K562 (cell line): ENCODE measurements at regions of chr5 and their contacts with region 1.

Region 1: DNA sequence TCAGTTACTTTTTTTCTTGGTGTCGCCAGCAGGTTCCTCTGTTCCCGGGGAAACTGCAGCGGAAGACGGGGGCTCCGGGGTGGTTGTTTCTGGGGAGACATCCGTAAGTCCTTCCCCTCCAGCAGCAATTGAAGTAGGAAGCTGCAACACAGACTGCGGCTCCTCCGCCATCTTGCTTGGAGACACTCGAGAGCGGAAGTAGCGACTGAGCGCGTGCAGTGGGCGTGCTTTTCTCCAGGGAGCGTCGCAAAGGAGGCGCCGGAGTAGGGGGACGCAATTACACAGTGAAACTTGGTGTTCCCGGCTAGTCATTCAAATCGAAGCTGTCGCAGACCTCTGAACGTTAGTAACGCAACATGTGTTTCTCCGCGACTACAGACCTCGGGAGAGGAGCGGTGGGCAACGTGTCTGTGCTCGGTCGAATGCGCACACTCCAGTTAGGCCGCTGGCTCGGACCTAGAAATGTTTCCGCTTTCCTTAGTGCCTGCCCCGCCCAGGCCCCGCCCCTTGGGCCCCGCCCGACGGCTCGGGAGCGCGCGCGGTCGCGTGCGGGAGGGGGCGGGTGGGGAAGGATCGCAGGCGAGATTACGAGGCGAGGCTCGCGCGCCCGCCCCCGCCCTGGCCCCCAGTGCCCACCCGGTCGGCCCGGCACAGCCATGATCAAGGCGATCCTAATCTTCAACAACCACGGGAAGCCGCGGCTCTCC is at the starts of genes AP3S1 and ATG12:
- DNase-seq: peak; percentile 88 to 96 (median 92)
- ATAC-seq: peak; percentile 88
- H3K4me3 ChIP-seq: peak within 1 kb of the TSS; percentile 79
- H3K27ac ChIP-seq: peak within 1 kb of the TSS; percentile 99
- H3K4me1 ChIP-seq: peaks cover 14 to 15% of the 10 kb centered on the region in 2 experiments; a peak in 4 of 5 replicates
- H3K27me3 ChIP-seq: no peaks in the 10 kb centered on the region
- CTCF ChIP-seq: no peak
- EP300 ChIP-seq: no peak
- POLR2A ChIP-seq: peak; percentile 95
- RAD21 ChIP-seq: no peak
- polyA plus RNA-seq, gene AP3S1: 46.1 to 46.3 TPM
- polyA plus RNA-seq, gene ATG12: 99.6 to 114 TPM

Region 2: GRCh38 chr5:115309751-115310370 is 531.7 kb before region 1 on chr5:
- CTCF ChIA-PET with region 1: interaction called, 3 read pairs
- POLR2A ChIA-PET with region 1: no interaction called
- in situ Hi-C with region 1: no loop called
- intact Hi-C with region 1: loop called (anchors 10 kb)
- DNase-seq: peak in 3 of 4 experiments; percentile 12 to 49 (median 15)
- ATAC-seq: peak; percentile 70
- H3K4me3 ChIP-seq: no peak overlapping the region
- H3K27ac ChIP-seq: no peak overlapping the region
- H3K4me1 ChIP-seq: no peaks in the 10 kb centered on the region
- H3K27me3 ChIP-seq: no peaks in the 10 kb centered on the region
- CTCF ChIP-seq: peak in 1 of 3 experiments; percentile 70; a peak in 3 of 6 replicates
- EP300 ChIP-seq: no peak
- POLR2A ChIP-seq: no peak
- RAD21 ChIP-seq: peak; percentile 87 to 91

Region 3: GRCh38 chr5:115544436-115545350 is 296.8 kb before region 1 on chr5 and contains the start of gene FEM1C:
- CTCF ChIA-PET with region 1: no interaction called
- POLR2A ChIA-PET with region 1: no interaction called
- in situ Hi-C with region 1: no loop called
- intact Hi-C with region 1: loop called (anchors 5 kb)
- DNase-seq: peak; percentile 95 to 96 (median 96)
- ATAC-seq: peak; percentile 97
- H3K4me3 ChIP-seq: peak within 1 kb of the TSS; percentile 84
- H3K27ac ChIP-seq: peak within 1 kb of the TSS; percentile 89
- H3K4me1 ChIP-seq: peaks cover 3 to 7% of the 10 kb centered on the region in 2 experiments; a peak in 2 of 5 replicates
- H3K27me3 ChIP-seq: no peaks in the 10 kb centered on the region
- CTCF ChIP-seq: no peak
- EP300 ChIP-seq: peak; percentile 32; the same call in 1 of the 2 replicates
- POLR2A ChIP-seq: peak; percentile 92
- RAD21 ChIP-seq: no peak
- polyA plus RNA-seq, gene FEM1C: 1.4 to 3.9 TPM

Region 4: GRCh38 chr5:115625579-115626444 is 215.7 kb before region 1 on chr5 and contains the start of gene TMED7:
- CTCF ChIA-PET with region 1: no interaction called
- POLR2A ChIA-PET with region 1: interaction called, 3 read pairs
- in situ Hi-C with region 1: loop called (anchors 5 kb)
- intact Hi-C with region 1: no loop called
- DNase-seq: peak; percentile 93 to 99 (median 93)
- ATAC-seq: peak; percentile 94
- H3K4me3 ChIP-seq: peak within 1 kb of the TSS; percentile 95
- H3K27ac ChIP-seq: peak within 1 kb of the TSS; percentile 96
- H3K4me1 ChIP-seq: peaks cover 9 to 19% of the 10 kb centered on the region in 2 experiments; a peak in 4 of 5 replicates
- H3K27me3 ChIP-seq: no peaks in the 10 kb centered on the region
- CTCF ChIP-seq: no peak
- EP300 ChIP-seq: peak; percentile 31; the same call in 1 of the 2 replicates
- POLR2A ChIP-seq: peak; percentile 93
- RAD21 ChIP-seq: no peak
- polyA plus RNA-seq, gene TMED7: 15.9 to 16.5 TPM

Region 5: GRCh38 chr5:115634343-115635132 is 207.0 kb before region 1 on chr5:
- CTCF ChIA-PET with region 1: interaction called, 4 read pairs
- POLR2A ChIA-PET with region 1: no interaction called
- in situ Hi-C with region 1: loop called (anchors 5 kb)
- intact Hi-C with region 1: loop called (anchors 2 kb)
- DNase-seq: peak; percentile 81 to 89 (median 84)
- ATAC-seq: peak; percentile 99
- H3K4me3 ChIP-seq: no peak overlapping the region
- H3K27ac ChIP-seq: peak overlapping the region; percentile 8; the same call in 1 of the 3 replicates
- H3K4me1 ChIP-seq: peaks cover 0 to 4% of the 10 kb centered on the region in 2 experiments; a peak in 1 of 5 replicates
- H3K27me3 ChIP-seq: peaks cover 0 to 2% of the 10 kb centered on the region in 2 experiments; a peak in 2 of 5 replicates
- CTCF ChIP-seq: peak; percentile 86 to 94 (median 89)
- EP300 ChIP-seq: no peak
- POLR2A ChIP-seq: no peak
- RAD21 ChIP-seq: peak; percentile 85 to 89

Region 6: GRCh38 chr5:115948091-115948534 is 106.6 kb after region 1 on chr5:
- CTCF ChIA-PET with region 1: no interaction called
- POLR2A ChIA-PET with region 1: no interaction called
- in situ Hi-C with region 1: no loop called
- intact Hi-C with region 1: no loop called
- DNase-seq: no peak
- ATAC-seq: no peak
- H3K4me3 ChIP-seq: no peak overlapping the region
- H3K27ac ChIP-seq: no peak overlapping the region
- H3K4me1 ChIP-seq: no peaks in the 10 kb centered on the region
- H3K27me3 ChIP-seq: no peaks in the 10 kb centered on the region; a peak in 2 of 5 replicates
- CTCF ChIP-seq: no peak
- EP300 ChIP-seq: no peak
- POLR2A ChIP-seq: no peak
- RAD21 ChIP-seq: no peak

Region 7: DNA sequence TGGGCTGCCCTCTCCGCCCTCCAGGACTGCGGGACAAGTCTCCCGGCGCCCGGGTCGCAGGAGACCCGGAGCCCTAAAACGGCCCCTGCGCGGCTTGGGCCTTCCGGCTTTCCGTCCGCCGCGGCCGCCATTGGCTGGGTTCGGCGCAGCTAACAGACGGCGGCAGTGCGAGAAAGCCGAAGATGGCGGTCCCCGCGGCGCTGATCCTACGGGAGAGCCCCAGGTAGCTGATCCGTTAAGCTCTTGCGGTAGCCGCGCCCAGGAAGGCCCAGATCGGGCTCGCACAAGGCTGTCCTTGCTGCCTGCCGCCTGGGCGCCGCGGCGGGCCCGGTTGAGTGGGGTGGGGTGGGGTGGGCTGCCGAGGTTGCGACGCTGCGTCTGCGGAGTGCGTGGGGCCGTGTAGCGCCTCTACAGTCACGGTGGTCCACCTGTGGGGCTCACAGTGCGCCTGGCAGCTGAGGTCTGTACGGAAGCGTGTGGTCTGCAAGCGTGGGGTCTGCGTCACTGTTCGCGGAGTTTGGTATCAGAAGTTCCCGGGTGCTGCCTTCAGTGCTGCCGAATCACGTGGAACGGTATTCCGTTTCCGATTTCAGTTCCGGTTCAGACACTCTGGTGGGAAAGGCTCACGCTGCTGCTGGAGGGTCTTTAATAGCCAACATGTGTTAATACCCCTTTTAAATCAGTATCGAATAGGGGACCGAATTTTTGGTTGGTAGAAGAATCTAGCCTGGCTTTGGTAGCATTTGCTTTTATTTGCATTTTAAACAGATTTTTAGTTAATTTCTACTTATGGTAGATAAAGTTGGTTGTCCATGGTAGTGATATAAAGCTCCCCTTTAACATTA is 243.6 kb after region 1 on chr5 and contains the start of gene COMMD10:
- CTCF ChIA-PET with region 1: no interaction called
- POLR2A ChIA-PET with region 1: no interaction called
- in situ Hi-C with region 1: no loop called
- intact Hi-C with region 1: loop called (anchors 5 kb)
- DNase-seq: peak; percentile 75 to 90 (median 78)
- ATAC-seq: peak; percentile 88
- H3K4me3 ChIP-seq: peak within 1 kb of the TSS; percentile 73
- H3K27ac ChIP-seq: peak within 1 kb of the TSS; percentile 95
- H3K4me1 ChIP-seq: peaks cover 10 to 13% of the 10 kb centered on the region in 2 experiments; a peak in 4 of 5 replicates
- H3K27me3 ChIP-seq: no peaks in the 10 kb centered on the region
- CTCF ChIP-seq: no peak
- EP300 ChIP-seq: no peak
- POLR2A ChIP-seq: peak; percentile 91
- RAD21 ChIP-seq: no peak
- polyA plus RNA-seq, gene COMMD10: 85.9 to 101 TPM